H1 (cell line): ENCODE measurements at regions of chr19 and their contacts with region 1.

Region 1: DNA sequence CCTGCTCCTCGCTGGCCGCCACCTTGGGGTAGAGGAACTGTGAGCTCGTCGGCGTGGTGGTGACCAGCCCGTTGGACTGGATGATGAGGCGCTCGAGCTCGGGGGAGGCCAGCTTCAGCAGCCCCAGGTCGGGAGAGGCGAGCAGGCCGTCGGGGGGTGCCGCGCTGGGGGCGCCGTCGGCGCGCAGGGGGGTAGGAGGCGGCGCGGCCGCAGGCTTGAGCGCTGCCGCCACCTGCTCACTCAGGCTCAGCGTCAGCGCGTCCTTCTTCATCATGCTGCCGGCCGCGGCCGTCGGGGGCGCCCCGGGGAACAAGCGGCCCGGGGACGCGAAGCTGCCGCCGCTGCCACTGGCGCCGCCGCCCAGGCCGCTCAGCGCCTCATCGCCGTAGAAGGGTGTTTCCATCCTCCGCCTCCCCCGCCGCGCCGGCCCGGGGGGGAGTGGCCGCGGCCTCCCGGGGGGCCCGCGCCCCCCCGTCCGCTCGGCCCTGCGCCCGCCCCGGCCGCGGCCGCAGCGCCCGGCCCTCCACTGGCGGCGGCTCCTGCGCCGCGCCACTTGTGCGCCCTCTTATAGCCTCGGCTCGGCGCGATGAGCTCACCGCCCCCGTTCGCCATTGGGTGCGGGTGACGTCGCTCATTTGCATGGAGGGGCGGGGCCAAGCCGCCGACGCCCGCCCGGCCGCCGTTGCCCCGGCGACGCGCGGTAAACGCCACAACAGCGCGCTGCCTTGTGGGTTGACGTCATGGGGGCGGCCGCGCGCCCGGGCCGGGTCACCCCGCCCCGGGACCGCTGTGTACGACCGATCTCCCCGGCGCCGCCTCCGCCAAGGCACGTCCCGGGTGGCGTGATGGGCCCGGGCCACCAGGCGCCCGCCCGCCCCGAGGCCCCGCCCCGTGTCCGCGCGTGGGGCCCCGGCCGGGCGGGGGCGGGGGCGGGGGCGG is at the start of gene JUND:
- DNase-seq: peak; percentile 90 to 97
- H3K4me3 ChIP-seq: peak within 1 kb of the TSS; percentile 88 to 99 (median 92)
- H3K27ac ChIP-seq: peak within 1 kb of the TSS; percentile 95
- H3K4me1 ChIP-seq: peaks cover 4 to 14% (median 8%) of the 10 kb centered on the region in 4 experiments; a peak in 5 of 7 replicates
- H3K27me3 ChIP-seq: no peaks in the 10 kb centered on the region; a peak in 1 of 7 replicates
- CTCF ChIP-seq: no peak
- EP300 ChIP-seq: peak; percentile 80 to 96
- POLR2A ChIP-seq: peak in 1 of 2 experiments; percentile 99; a peak in 2 of 3 replicates
- RAD21 ChIP-seq: 0 out of 4 replicates have a peak, but pooled peaks of 1 of the 2 experiments have one; percentile 0
- total RNA-seq, gene JUND: 77.5 and 95.8 TPM in 2 replicates

Region 2: GRCh38 chr19:18192673-18193387 is 88.5 kb before region 1 on chr19 and contains the start of gene MPV17L2:
- CTCF ChIA-PET with region 1: interaction called, 9 read pairs
- POLR2A ChIA-PET with region 1: interaction called, 38 read pairs
- DNase-seq: peak; percentile 95 to 99
- H3K4me3 ChIP-seq: peak within 1 kb of the TSS; percentile 82 to 96 (median 89)
- H3K27ac ChIP-seq: peak within 1 kb of the TSS; percentile 60
- H3K4me1 ChIP-seq: peaks cover 5 to 12% (median 8%) of the 10 kb centered on the region in 4 experiments
- H3K27me3 ChIP-seq: no peaks in the 10 kb centered on the region
- CTCF ChIP-seq: no peak
- EP300 ChIP-seq: no peak
- POLR2A ChIP-seq: peak in 1 of 2 experiments; percentile 69; a peak in 2 of 3 replicates
- RAD21 ChIP-seq: no peak
- total RNA-seq, gene MPV17L2: 24.2 and 28.6 TPM in 2 replicates

Region 3: GRCh38 chr19:18239303-18239702 is 42.0 kb before region 1 on chr19:
- CTCF ChIA-PET with region 1: interaction called, 172 read pairs
- POLR2A ChIA-PET with region 1: interaction called, 43 read pairs
- DNase-seq: peak in 1 of 2 experiments; percentile 74
- H3K4me3 ChIP-seq: no peak overlapping the region
- H3K27ac ChIP-seq: no peak overlapping the region
- H3K4me1 ChIP-seq: no peaks in the 10 kb centered on the region
- H3K27me3 ChIP-seq: no peaks in the 10 kb centered on the region; a peak in 1 of 7 replicates
- CTCF ChIP-seq: no peak
- EP300 ChIP-seq: no peak
- POLR2A ChIP-seq: no peak
- RAD21 ChIP-seq: no peak

Region 4: DNA sequence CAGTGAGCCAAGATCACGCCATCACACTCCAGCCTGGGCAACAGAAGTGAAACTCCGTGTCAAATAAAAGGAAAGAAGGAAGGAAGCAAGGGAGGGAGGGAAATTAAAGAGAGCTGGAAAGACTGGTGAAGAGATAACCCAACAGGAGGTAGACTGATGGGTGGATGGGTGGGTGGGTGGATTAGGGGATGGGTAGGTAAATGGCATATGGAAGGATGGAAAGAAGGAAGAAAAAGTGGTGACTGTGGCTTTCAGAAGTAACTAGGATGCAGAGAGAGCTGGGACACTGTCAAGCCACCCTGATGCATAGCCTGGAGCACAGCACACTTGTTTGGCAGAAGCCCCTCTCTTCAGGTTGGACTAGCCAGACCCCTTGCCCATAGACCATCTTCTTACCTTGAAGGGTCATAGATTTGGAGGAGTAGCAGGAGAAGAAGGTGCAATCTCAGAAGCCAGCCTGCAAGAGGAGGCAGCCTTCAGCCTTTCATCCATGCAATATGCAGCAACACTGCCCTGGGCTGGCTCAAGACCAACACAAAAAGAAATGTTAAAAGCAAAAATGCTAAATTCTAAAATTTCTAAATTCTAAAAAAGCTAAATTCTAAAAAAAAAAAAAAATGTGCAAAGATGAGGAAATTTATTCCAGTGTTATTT is 12.2 kb before region 1 on chr19:
- CTCF ChIA-PET with region 1: interaction called, 33 read pairs
- POLR2A ChIA-PET with region 1: interaction called, 24 read pairs
- DNase-seq: no peak
- H3K4me3 ChIP-seq: no peak overlapping the region
- H3K27ac ChIP-seq: no peak overlapping the region
- H3K4me1 ChIP-seq: no peaks in the 10 kb centered on the region; a peak in 2 of 7 replicates
- H3K27me3 ChIP-seq: no peaks in the 10 kb centered on the region
- CTCF ChIP-seq: no peak
- EP300 ChIP-seq: no peak
- POLR2A ChIP-seq: no peak
- RAD21 ChIP-seq: no peak

Region 5: DNA sequence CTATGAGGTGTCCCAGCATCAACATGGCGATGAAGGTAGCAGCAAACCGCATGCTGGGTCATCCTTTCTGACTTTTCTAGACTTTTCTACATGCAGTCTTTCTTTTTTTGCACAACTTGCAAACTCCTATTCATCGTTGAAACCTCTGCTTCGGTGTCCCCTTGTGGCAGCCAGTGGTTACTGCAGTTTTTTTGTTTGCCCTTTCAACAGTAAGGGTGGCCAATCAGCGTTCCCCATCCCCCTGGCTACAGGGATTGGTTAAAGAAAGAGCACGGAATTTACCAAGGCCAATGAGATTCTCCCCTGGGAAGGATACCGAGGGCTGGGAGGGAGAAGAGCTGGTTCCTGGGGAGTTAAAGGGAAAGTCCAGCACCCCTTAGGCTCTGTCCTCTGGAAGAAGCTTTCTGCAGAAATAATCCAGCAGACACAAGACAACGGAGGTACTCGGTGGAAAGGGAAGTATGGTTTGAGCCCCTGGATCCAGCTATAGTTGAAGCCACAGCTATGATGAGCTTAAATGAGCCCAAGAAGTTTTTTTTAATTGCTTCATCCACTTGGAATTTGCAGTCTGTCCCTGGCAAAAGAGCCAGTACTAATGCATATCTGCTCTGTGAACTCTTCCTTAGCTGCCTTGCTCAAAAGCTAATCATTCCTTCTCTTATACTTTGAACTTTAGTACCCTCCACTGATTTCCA is 47.1 kb after region 1 on chr19:
- CTCF ChIA-PET with region 1: interaction called, 179 read pairs
- POLR2A ChIA-PET with region 1: interaction called, 224 read pairs
- DNase-seq: peak; percentile 87
- H3K4me3 ChIP-seq: peak overlapping the region; percentile 28 to 53 (median 38); a peak in 6 of 8 replicates
- H3K27ac ChIP-seq: no peak overlapping the region; the same call in 1 of the 2 replicates
- H3K4me1 ChIP-seq: peaks cover 0 to 7% (median 4%) of the 10 kb centered on the region in 4 experiments; a peak in 5 of 7 replicates
- H3K27me3 ChIP-seq: no peaks in the 10 kb centered on the region
- CTCF ChIP-seq: peak; percentile 45 to 82 (median 69)
- EP300 ChIP-seq: no peak
- POLR2A ChIP-seq: 0 out of 3 replicates have a peak, but pooled peaks of 1 of the 2 experiments have one; percentile 49
- RAD21 ChIP-seq: peak; percentile 60 to 72

Region 6: GRCh38 chr19:18364826-18365528 is 83.6 kb after region 1 on chr19:
- CTCF ChIA-PET with region 1: interaction called, 19 read pairs
- POLR2A ChIA-PET with region 1: interaction called, 16 read pairs
- DNase-seq: no peak
- H3K4me3 ChIP-seq: no peak overlapping the region
- H3K27ac ChIP-seq: peak overlapping the region; percentile 87; the same call in 1 of the 2 replicates
- H3K4me1 ChIP-seq: peaks cover 1 to 14% (median 8%) of the 10 kb centered on the region in 4 experiments; a peak in 5 of 7 replicates
- H3K27me3 ChIP-seq: no peaks in the 10 kb centered on the region
- CTCF ChIP-seq: no peak
- EP300 ChIP-seq: 0 out of 3 replicates have a peak, but pooled peaks of 1 of the 2 experiments have one; percentile 14
- POLR2A ChIP-seq: no peak
- RAD21 ChIP-seq: no peak

Region 7: GRCh38 chr19:18408053-18408476 is 126.7 kb after region 1 on chr19:
- CTCF ChIA-PET with region 1: interaction called, 54 read pairs
- POLR2A ChIA-PET with region 1: interaction called, 18 read pairs
- DNase-seq: peak in 1 of 2 experiments; percentile 86
- H3K4me3 ChIP-seq: no peak overlapping the region
- H3K27ac ChIP-seq: no peak overlapping the region
- H3K4me1 ChIP-seq: no peaks in the 10 kb centered on the region
- H3K27me3 ChIP-seq: no peaks in the 10 kb centered on the region
- CTCF ChIP-seq: peak; percentile 63 to 82 (median 72)
- EP300 ChIP-seq: no peak
- POLR2A ChIP-seq: no peak
- RAD21 ChIP-seq: peak; percentile 62 to 69

Region 8: GRCh38 chr19:18450931-18451845 is 169.8 kb after region 1 on chr19:
- CTCF ChIA-PET with region 1: no interaction called
- POLR2A ChIA-PET with region 1: no interaction called
- DNase-seq: peak in 1 of 2 experiments; percentile 100
- H3K4me3 ChIP-seq: no peak overlapping the region
- H3K27ac ChIP-seq: no peak overlapping the region
- H3K4me1 ChIP-seq: no peaks in the 10 kb centered on the region; a peak in 3 of 7 replicates
- H3K27me3 ChIP-seq: no peaks in the 10 kb centered on the region
- CTCF ChIP-seq: peak; percentile 93 to 98 (median 95)
- EP300 ChIP-seq: no peak
- POLR2A ChIP-seq: no peak
- RAD21 ChIP-seq: peak; percentile 83 to 88

Region 9: GRCh38 chr19:18543816-18544475 is 262.6 kb after region 1 on chr19:
- CTCF ChIA-PET with region 1: no interaction called
- POLR2A ChIA-PET with region 1: no interaction called
- DNase-seq: peak in 1 of 2 experiments; percentile 74
- H3K4me3 ChIP-seq: peak overlapping the region; percentile 36 to 77 (median 42); a peak in 5 of 8 replicates
- H3K27ac ChIP-seq: no peak overlapping the region
- H3K4me1 ChIP-seq: peaks cover 0 to 9% (median 4%) of the 10 kb centered on the region in 4 experiments; a peak in 1 of 7 replicates
- H3K27me3 ChIP-seq: no peaks in the 10 kb centered on the region
- CTCF ChIP-seq: no peak
- EP300 ChIP-seq: no peak
- POLR2A ChIP-seq: peak in 1 of 2 experiments; percentile 27; a peak in 1 of 3 replicates
- RAD21 ChIP-seq: peak; percentile 21 to 26; a peak in 2 of 4 replicates